ENCODE measurements at regions of chr7 and their contacts with region 1.

Region 1: DNA sequence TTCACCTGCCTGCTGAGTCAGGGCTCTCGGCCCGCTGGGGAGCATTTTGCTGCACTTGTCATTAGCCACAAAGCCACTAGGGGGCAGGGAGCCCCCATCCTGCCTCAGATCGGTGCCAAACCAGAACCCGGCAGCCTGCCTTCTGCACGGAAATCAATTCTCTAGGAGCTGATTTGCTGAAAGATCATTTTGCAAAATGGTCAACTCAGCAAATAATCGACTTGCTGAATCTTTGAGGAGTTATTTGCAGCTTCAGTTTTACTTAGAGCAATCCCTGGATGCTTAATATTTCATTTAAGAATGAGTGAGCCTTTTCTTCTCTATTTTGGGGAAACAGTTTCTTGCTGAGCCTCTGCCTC is 1.7 kb upstream of the GIMAP8 start:
- DNase-seq: peak; percentile 88
- CTCF ChIP-seq: peak; percentile 80

Region 2: DNA sequence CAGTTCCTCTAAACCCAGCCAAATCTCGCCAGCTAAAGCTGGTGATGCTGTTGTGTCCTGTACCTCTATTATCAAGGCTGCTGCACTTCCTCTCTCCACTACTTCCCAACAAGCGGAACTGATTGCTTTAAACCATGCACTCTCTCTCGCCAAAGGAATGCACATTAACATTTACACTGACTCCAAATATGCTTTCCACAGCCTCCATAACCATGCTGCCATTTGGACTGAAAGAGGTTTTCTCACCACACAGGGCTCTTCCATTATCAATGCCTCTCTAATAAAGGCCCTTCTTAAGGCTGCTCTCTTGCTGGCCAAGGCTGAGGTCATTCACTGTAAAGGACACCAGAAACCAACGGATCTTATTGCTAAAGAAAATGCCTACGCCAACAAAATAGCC is 137.1 kb before region 1 on chr7:
- in situ Hi-C with region 1: no loop called
- DNase-seq: no peak
- CTCF ChIP-seq: no peak

Region 3: GRCh38 chr7:150340024-150340749 is 108.6 kb before region 1 on chr7:
- in situ Hi-C with region 1: no loop called
- DNase-seq: peak; percentile 68
- CTCF ChIP-seq: no peak

Region 4: GRCh38 chr7:150668472-150668911 is 219.7 kb after region 1 on chr7:
- in situ Hi-C with region 1: loop called (anchors 10 kb)
- DNase-seq: peak; percentile 51
- CTCF ChIP-seq: no peak

Region 5: GRCh38 chr7:150753826-150754603 is 305.2 kb after region 1 on chr7:
- in situ Hi-C with region 1: loop called (anchors 10 kb)
- DNase-seq: peak; percentile 40
- CTCF ChIP-seq: peak; percentile 28

Measured in GM13976 (cell line).